ENCODE measurements at regions of chr6 and their contacts with region 1.

Region 1: GRCh38 chr6:109187399-109188114 is 92.2 kb downstream of the CEP57L1 start:
- DNase-seq: peak; percentile 20 to 56 (median 43)
- H3K4me3 ChIP-seq: no peak overlapping the region
- H3K27ac ChIP-seq: no peak overlapping the region
- H3K4me1 ChIP-seq: no peaks in the 10 kb centered on the region
- H3K27me3 ChIP-seq: no peaks in the 10 kb centered on the region
- CTCF ChIP-seq: peak; percentile 46 to 53 (median 52)
- EP300 ChIP-seq: no peak
- POLR2A ChIP-seq: no peak

Region 2: GRCh38 chr6:109139109-109139508 is 48.4 kb before region 1 on chr6:
- intact Hi-C with region 1: no loop called
- DNase-seq: no peak
- H3K4me3 ChIP-seq: no peak overlapping the region
- H3K27ac ChIP-seq: no peak overlapping the region
- H3K4me1 ChIP-seq: no peaks in the 10 kb centered on the region
- H3K27me3 ChIP-seq: no peaks in the 10 kb centered on the region
- CTCF ChIP-seq: no peak
- EP300 ChIP-seq: no peak
- POLR2A ChIP-seq: no peak

Region 3: GRCh38 chr6:109397020-109397419 is 209.5 kb after region 1 on chr6:
- intact Hi-C with region 1: loop called in 1 of 4 experiments (anchors 2 kb)
- DNase-seq: no peak
- H3K4me3 ChIP-seq: no peak overlapping the region
- H3K27ac ChIP-seq: no peak overlapping the region
- H3K4me1 ChIP-seq: no peaks in the 10 kb centered on the region
- H3K27me3 ChIP-seq: no peaks in the 10 kb centered on the region
- CTCF ChIP-seq: no peak
- EP300 ChIP-seq: no peak
- POLR2A ChIP-seq: no peak